T-cell (primary cell): ENCODE measurements at regions of chr12 and their contacts with region 1.

Region 1: DNA sequence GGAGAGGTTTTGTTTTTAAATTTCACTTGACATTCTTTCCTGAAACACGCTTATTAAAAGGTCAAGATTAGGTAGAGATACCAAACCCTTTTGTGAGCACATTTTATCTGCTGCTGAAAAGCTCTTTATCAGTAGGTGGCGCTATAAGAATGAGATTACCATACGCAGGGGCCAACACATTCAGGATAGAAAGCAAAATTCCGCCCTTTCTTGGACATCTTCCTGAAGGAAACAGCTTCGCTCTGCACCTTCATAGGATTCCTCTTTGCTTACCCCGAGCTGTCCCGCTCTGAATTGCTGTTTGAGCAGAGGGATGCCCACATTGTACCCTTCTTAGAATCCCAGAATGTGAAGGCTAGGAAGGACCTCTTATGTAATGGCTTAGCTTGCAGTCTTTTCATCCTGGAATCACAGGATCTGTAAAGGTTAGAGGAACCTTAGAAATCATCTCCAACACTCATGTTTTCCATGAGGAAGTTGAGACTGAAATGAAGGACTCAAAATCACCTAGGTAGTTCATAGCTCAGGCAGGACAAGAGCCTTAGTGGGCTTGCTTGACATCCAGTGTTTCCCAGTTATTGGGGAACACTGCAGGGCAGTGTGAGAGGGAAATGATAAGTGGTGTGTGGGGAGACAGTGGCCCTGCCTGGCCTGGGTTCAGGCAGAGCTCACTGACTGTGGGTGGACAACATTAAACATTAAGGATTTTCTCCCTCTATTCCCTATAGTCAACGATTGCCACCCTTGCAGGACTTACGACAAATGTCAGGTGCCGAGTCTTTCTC is 38.7 kb upstream of the CRY1 start:
- DNase-seq: peak in 9 of 35 experiments; percentile 0 to 70 (median 7)
- ATAC-seq: peak in 2 of 4 experiments; percentile 26 to 30
- H3K4me3 ChIP-seq: no peak overlapping the region
- H3K4me3 Mint-ChIP-seq: no peak overlapping the region
- H3K27ac ChIP-seq: no peak overlapping the region
- H3K27ac Mint-ChIP-seq: no peak overlapping the region
- H3K4me1 ChIP-seq: peaks cover 0 to 4% of the 10 kb centered on the region in 2 experiments
- H3K4me1 Mint-ChIP-seq: peaks cover 0 to 5% (median 4%) of the 10 kb centered on the region in 3 donors
- H3K27me3 ChIP-seq: no peaks in the 10 kb centered on the region
- H3K27me3 Mint-ChIP-seq: no peaks in the 10 kb centered on the region

Region 2: GRCh38 chr12:107144441-107144840 is 12.4 kb after region 1 on chr12:
- CTCF ChIA-PET with region 1: interaction called, 5 to 13 read pairs
- POLR2A ChIA-PET with region 1: no interaction called
- DNase-seq: no peak
- ATAC-seq: no peak
- H3K4me3 ChIP-seq: no peak overlapping the region
- H3K4me3 Mint-ChIP-seq: no peak overlapping the region
- H3K27ac ChIP-seq: no peak overlapping the region
- H3K27ac Mint-ChIP-seq: no peak overlapping the region
- H3K4me1 ChIP-seq: no peaks in the 10 kb centered on the region
- H3K4me1 Mint-ChIP-seq: no peaks in the 10 kb centered on the region
- H3K27me3 ChIP-seq: no peaks in the 10 kb centered on the region
- H3K27me3 Mint-ChIP-seq: peaks cover 0 to 3% of the 10 kb centered on the region in 2 donors

Region 3: GRCh38 chr12:107402041-107403022 is 270.3 kb after region 1 on chr12:
- CTCF ChIA-PET with region 1: interaction called, 27 to 51 read pairs
- POLR2A ChIA-PET with region 1: no interaction called
- DNase-seq: peak; percentile 16 to 75 (median 49)
- ATAC-seq: peak; percentile 56 to 75 (median 72)
- H3K4me3 ChIP-seq: no peak overlapping the region
- H3K4me3 Mint-ChIP-seq: peak overlapping the region in 1 of 3 donors; percentile 7
- H3K27ac ChIP-seq: no peak overlapping the region
- H3K27ac Mint-ChIP-seq: no peak overlapping the region
- H3K4me1 ChIP-seq: peaks cover 18 to 20% of the 10 kb centered on the region in 2 experiments
- H3K4me1 Mint-ChIP-seq: peaks cover 20 to 37% (median 35%) of the 10 kb centered on the region in 3 donors
- H3K27me3 ChIP-seq: no peaks in the 10 kb centered on the region
- H3K27me3 Mint-ChIP-seq: no peaks in the 10 kb centered on the region

Region 4: GRCh38 chr12:107602446-107602845 is 470.4 kb after region 1 on chr12:
- CTCF ChIA-PET with region 1: interaction called, 86 to 90 read pairs
- POLR2A ChIA-PET with region 1: no interaction called
- DNase-seq: no peak
- ATAC-seq: no peak
- H3K4me3 ChIP-seq: no peak overlapping the region
- H3K4me3 Mint-ChIP-seq: no peak overlapping the region
- H3K27ac ChIP-seq: no peak overlapping the region
- H3K27ac Mint-ChIP-seq: no peak overlapping the region
- H3K4me1 ChIP-seq: no peaks in the 10 kb centered on the region
- H3K4me1 Mint-ChIP-seq: peaks cover 0 to 1% (median 0%) of the 10 kb centered on the region in 3 donors
- H3K27me3 ChIP-seq: no peaks in the 10 kb centered on the region
- H3K27me3 Mint-ChIP-seq: no peaks in the 10 kb centered on the region

Region 5: DNA sequence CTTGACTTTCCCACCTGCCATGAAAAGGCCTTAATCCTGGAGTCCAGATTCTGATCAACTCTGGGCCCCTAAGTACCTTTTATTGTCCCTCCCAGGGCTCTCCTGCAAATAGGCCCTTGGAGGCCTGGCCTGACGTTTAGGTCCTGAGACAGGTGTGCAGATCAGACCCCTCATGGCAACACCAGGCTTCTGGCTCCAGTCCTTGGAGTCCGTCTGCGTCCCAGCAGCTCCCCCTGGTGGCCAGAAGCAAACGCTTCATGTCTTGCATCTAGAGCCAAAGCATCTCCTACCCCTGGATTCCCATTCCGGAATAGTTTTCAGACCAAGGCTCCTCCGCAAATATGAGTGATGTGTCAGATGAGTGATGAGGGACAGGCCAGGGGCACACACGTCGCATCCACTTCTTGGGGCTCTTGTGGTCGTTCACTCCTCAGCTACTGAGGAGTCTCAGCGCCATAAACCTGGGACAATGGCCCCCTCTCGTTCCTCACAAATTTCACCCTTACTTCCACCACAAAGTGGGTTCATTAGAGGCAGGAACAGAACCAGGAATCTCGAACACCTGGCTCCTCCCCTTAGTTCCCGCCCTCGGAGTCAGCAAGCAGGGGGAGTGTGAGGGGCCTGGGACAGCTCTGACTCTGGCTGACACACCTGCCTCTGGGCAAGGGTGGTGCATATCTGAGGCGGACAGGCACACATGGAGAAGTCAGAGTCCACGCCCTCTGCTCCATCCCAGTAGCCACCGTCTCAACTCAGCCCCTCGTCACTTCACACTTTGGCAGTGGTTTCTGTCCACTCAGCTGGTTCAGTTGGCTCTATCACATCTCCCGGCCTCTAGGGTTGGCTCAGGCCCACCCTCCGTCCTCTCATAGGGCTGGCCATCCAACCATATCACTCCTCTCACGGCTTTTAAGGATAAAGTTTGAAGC is 475.7 kb after region 1 on chr12:
- CTCF ChIA-PET with region 1: interaction called, 86 to 90 read pairs
- POLR2A ChIA-PET with region 1: no interaction called
- DNase-seq: peak; percentile 44 to 88 (median 75)
- ATAC-seq: peak; percentile 70 to 73 (median 71)
- H3K4me3 ChIP-seq: no peak overlapping the region
- H3K4me3 Mint-ChIP-seq: no peak overlapping the region
- H3K27ac ChIP-seq: no peak overlapping the region
- H3K27ac Mint-ChIP-seq: no peak overlapping the region
- H3K4me1 ChIP-seq: no peaks in the 10 kb centered on the region
- H3K4me1 Mint-ChIP-seq: peaks cover 0 to 2% (median 0%) of the 10 kb centered on the region in 3 donors
- H3K27me3 ChIP-seq: no peaks in the 10 kb centered on the region
- H3K27me3 Mint-ChIP-seq: no peaks in the 10 kb centered on the region